Prostate gland (tissue), 2 donors: ENCODE measurements at regions of chr15 and their contacts with region 1.

Region 1: DNA sequence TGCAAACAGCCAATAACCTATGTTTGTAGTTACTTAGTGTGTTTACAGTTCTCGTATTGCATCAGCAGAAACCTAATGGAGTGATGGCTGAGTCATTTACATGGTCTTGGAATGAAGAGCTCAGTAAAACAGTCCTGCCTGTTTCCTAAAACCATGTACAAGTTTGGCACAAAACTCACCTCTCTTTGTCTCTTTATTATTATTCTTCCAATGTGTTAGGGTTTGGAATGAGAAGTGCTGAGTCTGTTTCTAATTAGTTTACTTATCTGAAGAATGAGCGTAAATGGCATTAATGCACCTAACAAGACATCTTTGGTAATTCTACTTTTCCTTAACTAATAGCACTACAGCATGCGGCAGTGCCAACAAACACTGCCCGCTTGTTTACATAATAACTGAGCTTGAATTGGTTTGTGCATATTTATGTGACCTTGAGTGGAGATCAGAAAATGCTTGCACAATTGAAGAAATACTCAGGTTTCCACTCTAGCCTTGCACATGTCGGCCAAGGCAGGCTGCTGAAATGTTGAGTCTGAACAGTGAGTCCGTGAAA is 385.4 kb upstream of the SEMA6D start:
- DNase-seq: no peak
- H3K4me3 ChIP-seq: no peak overlapping the region
- H3K27ac ChIP-seq: no peak overlapping the region
- H3K4me1 ChIP-seq: no peaks in the 10 kb centered on the region
- H3K27me3 ChIP-seq: no peaks in the 10 kb centered on the region
- CTCF ChIP-seq: no peak
- POLR2A ChIP-seq: no peak

Region 2: GRCh38 chr15:47409600-47409999 is 77.7 kb after region 1 on chr15:
- intact Hi-C with region 1: loop called (anchors 5 kb)
- DNase-seq: no peak
- H3K4me3 ChIP-seq: no peak overlapping the region
- H3K27ac ChIP-seq: no peak overlapping the region
- H3K4me1 ChIP-seq: no peaks in the 10 kb centered on the region
- H3K27me3 ChIP-seq: no peaks in the 10 kb centered on the region
- CTCF ChIP-seq: no peak
- POLR2A ChIP-seq: no peak